ENCODE measurements at regions of chr15 and their contacts with region 1.

Region 1: GRCh38 chr15:50134520-50135024 is 15.5 kb upstream of the ATP8B4 start:
- DNase-seq: no peak
- ATAC-seq: peak; percentile 47
- H3K4me3 Mint-ChIP-seq: peak overlapping the region; percentile 24
- H3K27ac Mint-ChIP-seq: peak overlapping the region; percentile 96
- H3K4me1 Mint-ChIP-seq: peaks cover 53% of the 10 kb centered on the region
- H3K27me3 Mint-ChIP-seq: no peaks in the 10 kb centered on the region

Region 2: DNA sequence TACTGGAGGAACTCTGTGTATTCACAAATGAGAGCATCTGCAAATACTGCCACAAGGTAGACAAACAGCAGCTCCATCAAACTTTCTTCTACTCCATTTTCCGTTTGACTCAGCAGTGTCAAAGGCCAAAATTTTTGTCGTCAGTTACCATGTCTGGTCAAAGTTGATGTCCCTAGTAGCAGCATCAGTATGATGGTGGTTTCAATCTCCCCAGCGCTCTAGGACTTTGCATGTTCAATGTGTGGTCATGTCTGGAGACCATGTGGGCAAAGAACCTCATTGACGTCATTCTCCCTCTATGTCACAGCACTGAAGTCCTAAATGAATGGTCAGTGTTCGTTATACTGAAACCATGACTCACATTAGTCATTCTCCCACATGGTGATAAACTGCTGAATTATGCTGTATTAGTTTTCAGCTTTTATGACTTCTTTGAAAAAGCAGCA is 1194.1 kb before region 1 on chr15:
- CTCF ChIA-PET with region 1: no interaction called
- POLR2A ChIA-PET with region 1: no interaction called
- intact Hi-C with region 1: loop called (anchors 5 to 10 kb)
- DNase-seq: peak; percentile 31
- ATAC-seq: peak; percentile 83
- H3K4me3 Mint-ChIP-seq: no peak overlapping the region
- H3K27ac Mint-ChIP-seq: no peak overlapping the region
- H3K4me1 Mint-ChIP-seq: peaks cover 10% of the 10 kb centered on the region
- H3K27me3 Mint-ChIP-seq: peaks cover 35% of the 10 kb centered on the region

Region 3: DNA sequence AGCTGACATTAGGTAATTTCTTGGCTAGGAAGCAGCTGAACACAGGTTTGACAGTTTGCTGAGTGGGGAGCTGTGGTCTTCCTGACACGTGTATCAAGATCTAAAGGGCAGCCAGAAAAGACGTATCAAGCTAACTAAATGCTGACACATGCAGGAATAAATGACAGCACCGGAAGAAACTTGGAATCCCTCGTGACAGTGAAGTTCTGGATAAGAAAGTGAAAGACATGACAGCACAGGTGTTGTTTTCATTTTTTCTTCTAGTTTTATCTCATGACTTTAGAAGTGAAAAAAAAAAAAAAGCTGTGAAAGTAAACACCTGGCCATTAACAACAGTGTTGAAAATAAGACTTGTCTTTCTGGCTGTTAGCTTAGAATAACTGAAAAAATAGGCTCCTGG is 662.8 kb before region 1 on chr15:
- CTCF ChIA-PET with region 1: no interaction called
- POLR2A ChIA-PET with region 1: no interaction called
- intact Hi-C with region 1: loop called in 1 of 2 experiments (anchors 5 kb)
- DNase-seq: peak; percentile 33
- ATAC-seq: peak; percentile 72
- H3K4me3 Mint-ChIP-seq: no peak overlapping the region
- H3K27ac Mint-ChIP-seq: no peak overlapping the region
- H3K4me1 Mint-ChIP-seq: peaks cover 7% of the 10 kb centered on the region
- H3K27me3 Mint-ChIP-seq: peaks cover 2% of the 10 kb centered on the region

Region 4: GRCh38 chr15:50176869-50177268 is 42.3 kb after region 1 on chr15:
- CTCF ChIA-PET with region 1: no interaction called
- POLR2A ChIA-PET with region 1: interaction called, 4 read pairs
- intact Hi-C with region 1: loop called (anchors 2 to 5 kb)
- DNase-seq: no peak
- ATAC-seq: peak; percentile 92
- H3K4me3 Mint-ChIP-seq: no peak overlapping the region
- H3K27ac Mint-ChIP-seq: peak overlapping the region; percentile 20
- H3K4me1 Mint-ChIP-seq: peaks cover 23% of the 10 kb centered on the region
- H3K27me3 Mint-ChIP-seq: peaks cover 43% of the 10 kb centered on the region

Region 5: DNA sequence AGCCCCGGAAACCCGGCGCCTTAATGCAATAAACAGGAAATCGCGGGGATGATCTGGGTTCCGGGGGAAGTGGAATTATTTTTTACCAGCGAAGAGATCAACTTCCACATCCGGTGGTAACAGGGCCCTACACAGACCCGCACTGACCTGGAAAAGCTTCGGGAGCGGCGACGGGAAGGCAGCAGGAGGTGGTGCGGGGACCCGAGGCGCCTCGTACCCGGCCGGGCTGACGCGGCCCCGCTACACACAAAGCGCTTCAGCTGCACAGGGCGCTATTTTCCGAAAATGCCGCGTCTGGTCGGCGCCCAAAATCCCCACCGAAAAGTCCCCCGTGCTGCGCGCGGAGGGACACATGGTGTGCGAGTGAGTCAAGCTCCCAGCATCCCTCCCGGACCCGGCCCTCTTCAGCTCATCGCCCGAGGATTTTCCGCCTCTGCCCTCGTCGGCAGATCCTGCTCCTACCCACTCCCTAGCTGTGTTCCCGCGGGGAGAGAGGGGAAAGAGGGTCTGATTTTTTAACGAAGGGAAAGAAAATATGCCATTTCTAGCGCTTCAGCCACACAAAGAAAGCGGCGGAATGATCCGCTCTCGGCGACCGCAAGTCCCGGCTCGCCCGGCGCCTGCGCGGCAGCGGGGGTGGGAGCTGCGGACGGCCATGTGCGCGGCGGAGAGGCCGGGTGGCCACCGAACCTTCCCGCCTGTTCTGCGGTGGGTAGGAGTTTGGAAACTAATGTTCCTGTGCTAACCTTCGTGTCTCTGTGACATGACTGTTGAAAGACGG is 220.5 kb after region 1 on chr15 and contains the start of gene GABPB1:
- CTCF ChIA-PET with region 1: interaction called, 3 read pairs
- POLR2A ChIA-PET with region 1: interaction called, 18 read pairs
- intact Hi-C with region 1: loop called (anchors 1 kb)
- DNase-seq: peak; percentile 94
- ATAC-seq: peak; percentile 42
- H3K4me3 Mint-ChIP-seq: peak within 1 kb of the TSS; percentile 99
- H3K27ac Mint-ChIP-seq: peak within 1 kb of the TSS; percentile 100
- H3K4me1 Mint-ChIP-seq: peaks cover 44% of the 10 kb centered on the region
- H3K27me3 Mint-ChIP-seq: no peaks in the 10 kb centered on the region
- total RNA-seq, gene GABPB1: 46.3 to 53.4 TPM

Region 6: GRCh38 chr15:50883903-50884302 is 749.3 kb after region 1 on chr15:
- CTCF ChIA-PET with region 1: no interaction called
- POLR2A ChIA-PET with region 1: no interaction called
- intact Hi-C with region 1: loop called in 1 of 2 experiments (anchors 2 kb)
- DNase-seq: peak; percentile 26
- ATAC-seq: no peak
- H3K4me3 Mint-ChIP-seq: no peak overlapping the region
- H3K27ac Mint-ChIP-seq: peak overlapping the region; percentile 37
- H3K4me1 Mint-ChIP-seq: peaks cover 58% of the 10 kb centered on the region
- H3K27me3 Mint-ChIP-seq: no peaks in the 10 kb centered on the region